ENCODE measurements at regions of chr5 and their contacts with region 1.

Region 1: DNA sequence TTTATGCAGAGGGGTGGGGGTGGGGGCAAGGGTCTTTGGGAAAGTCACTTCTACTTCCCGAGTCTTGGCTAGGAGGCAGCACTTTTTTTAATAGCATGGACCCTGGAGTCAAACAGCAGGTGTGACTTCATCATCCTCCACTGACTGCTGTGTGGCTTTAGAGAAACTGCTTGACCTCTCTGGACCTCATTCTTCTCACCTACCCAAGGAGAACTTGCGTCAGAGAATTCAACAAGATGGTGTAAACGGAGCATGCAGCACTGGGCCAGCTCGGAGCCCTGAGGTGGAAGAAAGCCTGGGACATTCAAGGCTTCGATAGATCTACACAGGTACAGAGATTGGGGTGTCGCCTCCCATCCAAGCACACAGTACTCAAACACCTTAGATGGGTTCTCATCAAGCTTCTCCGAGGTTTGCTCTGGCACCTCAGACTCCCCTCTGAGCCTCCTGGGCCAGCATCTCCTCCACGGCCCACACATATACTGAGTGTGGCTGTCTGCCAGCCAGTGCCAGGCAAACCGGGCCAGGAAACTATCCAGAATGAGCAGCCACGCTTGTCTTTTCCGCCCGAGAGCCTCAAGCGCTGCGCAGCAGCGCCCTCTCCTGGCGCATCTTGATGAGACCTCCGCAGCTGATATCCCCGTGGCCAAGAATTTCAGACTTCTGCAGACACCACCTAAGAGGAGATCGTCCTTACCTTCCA is 4.6 kb upstream of the SLC25A48 start:
- DNase-seq: peak in 41 of 42 donors; percentile 56 to 91 (median 79)

Region 2: GRCh38 chr5:135559354-135559753 is 270.5 kb before region 1 on chr5:
- intact Hi-C with region 1: loop called (anchors 5 kb)
- DNase-seq: no peak